AG04449 (cell line): ENCODE measurements at regions of chr2 and their contacts with region 1.

Region 1: GRCh38 chr2:24435391-24436316 is 55.4 kb upstream of the NCOA1 start:
- DNase-seq: no peak
- H3K4me3 ChIP-seq: no peak overlapping the region
- CTCF ChIP-seq: no peak

Region 2: DNA sequence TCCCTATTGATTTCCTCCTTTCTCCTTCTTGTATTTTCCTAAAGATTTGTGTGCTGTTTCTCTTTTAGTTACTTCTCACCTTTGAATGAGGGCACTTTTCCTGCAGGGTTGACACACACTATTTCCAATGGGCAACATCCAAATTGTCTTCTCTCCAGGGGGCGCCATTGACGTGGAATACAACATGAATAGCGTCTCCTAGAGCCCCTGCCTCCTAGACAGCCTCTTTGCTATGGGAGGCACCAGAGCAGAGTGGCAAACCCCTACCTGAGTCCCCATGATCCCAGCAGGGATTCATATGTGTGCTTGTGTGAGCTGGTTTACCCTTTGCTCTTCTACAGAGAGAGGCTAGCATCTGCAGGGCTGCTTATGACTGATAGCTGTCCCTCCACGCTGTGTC is 14.0 kb before region 1 on chr2:
- CTCF ChIA-PET with region 1: interaction called, 22 read pairs
- POLR2A ChIA-PET with region 1: no interaction called
- DNase-seq: no peak
- H3K4me3 ChIP-seq: no peak overlapping the region
- CTCF ChIP-seq: peak; percentile 53